SK-N-SH (cell line): ENCODE measurements at regions of chr2 and their contacts with region 1.

Region 1: DNA sequence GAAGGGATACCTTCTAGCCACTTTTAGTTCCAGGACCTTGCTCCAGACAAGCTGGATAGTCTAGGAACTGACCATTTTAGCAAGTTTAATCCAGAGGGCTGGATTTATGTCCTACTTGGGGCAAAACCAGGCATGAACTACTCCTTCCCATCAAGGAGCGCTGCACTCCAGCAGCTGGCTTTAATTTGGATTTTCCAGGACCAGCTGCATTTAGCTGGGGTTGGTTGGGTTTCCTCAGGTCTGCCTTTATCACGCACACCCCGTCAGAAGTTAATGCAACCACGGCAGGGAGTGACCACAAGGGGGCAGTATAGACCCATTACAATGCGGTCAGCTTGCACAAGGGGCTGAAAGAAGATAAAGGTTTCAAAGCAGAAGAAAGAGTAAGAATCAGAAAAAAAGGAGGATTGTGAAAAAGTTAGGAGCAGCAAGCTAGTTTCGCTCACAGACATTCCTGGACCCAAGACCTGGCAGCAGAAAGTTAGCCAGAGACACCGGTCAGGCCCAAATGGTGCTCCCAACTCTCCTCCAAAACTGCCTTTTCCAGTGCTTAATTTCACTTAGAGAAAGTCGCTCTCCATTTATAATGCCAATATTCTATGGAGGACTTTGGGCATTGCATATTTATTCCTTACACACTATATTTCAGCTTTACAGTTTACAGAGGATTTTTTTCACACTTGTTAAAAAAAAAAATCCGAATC is 40.1 kb downstream of the SLC4A1AP start:
- DNase-seq: peak; percentile 88
- H3K4me3 ChIP-seq: no peak overlapping the region; a peak in 1 of 4 replicates
- H3K27ac ChIP-seq: peak overlapping the region in 1 of 2 experiments; percentile 29; a peak in 1 of 4 replicates
- H3K4me1 ChIP-seq: peaks cover 10 to 16% of the 10 kb centered on the region in 2 experiments; a peak in 3 of 4 replicates
- H3K27me3 ChIP-seq: no peaks in the 10 kb centered on the region
- CTCF ChIP-seq: peak; percentile 99
- EP300 ChIP-seq: peak in 1 of 2 experiments; percentile 48; a peak in 1 of 4 replicates
- RAD21 ChIP-seq: peak; percentile 98

Region 2: GRCh38 chr2:27715318-27716210 is 11.8 kb after region 1 on chr2:
- CTCF ChIA-PET with region 1: interaction called, 64 read pairs
- POLR2A ChIA-PET with region 1: no interaction called
- DNase-seq: peak; percentile 93
- H3K4me3 ChIP-seq: peak overlapping the region; percentile 51 to 58
- H3K27ac ChIP-seq: peak overlapping the region; percentile 3 to 60; a peak in 3 of 4 replicates
- H3K4me1 ChIP-seq: peaks cover 9 to 11% of the 10 kb centered on the region in 2 experiments; a peak in 3 of 4 replicates
- H3K27me3 ChIP-seq: no peaks in the 10 kb centered on the region
- CTCF ChIP-seq: no peak
- EP300 ChIP-seq: 0 out of 4 replicates have a peak, but pooled peaks of 1 of the 2 experiments have one; percentile 17
- RAD21 ChIP-seq: no peak

Region 3: DNA sequence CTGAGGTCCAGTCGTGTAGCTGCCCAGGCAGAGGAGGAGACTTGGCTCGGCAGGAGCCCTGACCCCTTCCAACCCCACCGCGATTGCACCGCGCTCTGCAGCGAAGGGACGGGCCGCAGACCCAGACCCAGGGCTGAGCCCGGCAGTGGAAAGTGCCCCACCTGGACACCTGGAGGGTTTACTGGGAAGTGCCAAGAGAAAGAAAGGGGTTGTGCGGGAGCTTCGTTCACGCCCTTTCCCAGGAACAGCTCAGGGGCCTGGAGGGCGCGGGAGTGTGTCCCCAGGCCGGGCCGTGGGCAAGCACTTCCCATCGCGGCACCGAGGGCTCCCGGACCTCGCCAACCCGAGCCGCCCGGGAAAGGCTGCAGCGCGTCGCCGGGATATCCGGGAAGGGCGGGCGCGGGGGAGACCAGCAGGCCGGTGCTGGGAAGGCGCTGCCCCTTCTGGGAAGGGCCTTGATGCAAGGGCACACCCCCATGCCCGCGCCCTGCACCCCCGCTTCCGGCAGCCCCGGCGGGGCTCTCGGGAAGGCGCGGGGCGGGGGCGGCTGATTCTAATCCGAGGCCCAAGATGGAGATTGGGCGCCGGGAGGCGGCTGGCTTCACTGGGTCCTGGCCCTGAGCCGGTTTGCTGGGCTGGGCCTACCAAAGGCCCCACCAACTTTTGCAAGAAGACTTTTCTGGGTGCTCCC is 31.6 kb after region 1 on chr2:
- CTCF ChIA-PET with region 1: interaction called, 26 read pairs
- POLR2A ChIA-PET with region 1: no interaction called
- DNase-seq: no peak
- H3K4me3 ChIP-seq: no peak overlapping the region
- H3K27ac ChIP-seq: no peak overlapping the region
- H3K4me1 ChIP-seq: peaks cover 0 to 19% of the 10 kb centered on the region in 2 experiments; a peak in 2 of 4 replicates
- H3K27me3 ChIP-seq: no peaks in the 10 kb centered on the region
- CTCF ChIP-seq: no peak
- EP300 ChIP-seq: no peak
- RAD21 ChIP-seq: no peak

Region 4: GRCh38 chr2:27771548-27772335 is 68.0 kb after region 1 on chr2 and contains the start of gene MRPL33:
- CTCF ChIA-PET with region 1: interaction called, 10 read pairs
- POLR2A ChIA-PET with region 1: no interaction called
- DNase-seq: peak; percentile 99
- H3K4me3 ChIP-seq: peak within 1 kb of the TSS; percentile 78 to 98
- H3K27ac ChIP-seq: peak within 1 kb of the TSS; percentile 77 to 99
- H3K4me1 ChIP-seq: peaks cover 0 to 22% of the 10 kb centered on the region in 2 experiments; a peak in 3 of 4 replicates
- H3K27me3 ChIP-seq: no peaks in the 10 kb centered on the region
- CTCF ChIP-seq: no peak
- EP300 ChIP-seq: peak; percentile 4 to 28; a peak in 2 of 4 replicates
- RAD21 ChIP-seq: peak; percentile 17; the same call in 1 of the 2 replicates
- polyA plus RNA-seq, gene MRPL33: 132 and 153 TPM in 2 replicates

Region 5: DNA sequence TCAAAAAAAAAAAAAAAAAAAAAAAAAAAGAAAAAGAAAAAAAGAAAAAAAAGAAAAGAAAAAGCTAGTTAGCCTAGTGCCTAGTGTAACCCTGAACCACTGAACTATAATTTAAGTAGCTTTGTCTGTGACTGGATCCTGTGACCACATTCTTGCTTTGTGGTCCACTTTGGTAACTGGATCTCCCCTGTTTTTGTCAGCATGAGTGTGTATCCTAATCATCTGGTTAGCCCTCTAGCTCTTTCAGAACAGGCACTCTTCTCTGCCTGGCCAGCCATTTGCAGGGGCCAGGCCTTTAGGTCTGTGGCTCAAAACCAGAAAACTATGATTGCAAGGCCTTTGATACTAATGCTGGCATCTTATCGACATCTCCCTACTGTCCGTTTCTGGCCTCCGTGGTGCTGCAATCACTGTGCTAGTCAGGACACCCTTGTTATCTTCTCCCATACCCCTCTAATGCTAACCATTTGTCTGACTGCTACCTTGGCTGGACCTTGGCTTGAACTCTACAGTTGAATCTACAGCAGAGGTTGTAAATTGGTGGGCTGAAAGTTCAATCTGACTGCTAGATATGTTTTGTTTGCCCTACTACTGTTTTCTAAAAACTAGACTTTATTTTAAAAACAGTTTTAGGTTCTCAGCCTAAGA is 145.9 kb after region 1 on chr2:
- CTCF ChIA-PET with region 1: no interaction called
- POLR2A ChIA-PET with region 1: no interaction called
- DNase-seq: no peak
- H3K4me3 ChIP-seq: no peak overlapping the region
- H3K27ac ChIP-seq: no peak overlapping the region
- H3K4me1 ChIP-seq: no peaks in the 10 kb centered on the region
- H3K27me3 ChIP-seq: no peaks in the 10 kb centered on the region
- CTCF ChIP-seq: no peak
- EP300 ChIP-seq: no peak
- RAD21 ChIP-seq: no peak

Region 6: DNA sequence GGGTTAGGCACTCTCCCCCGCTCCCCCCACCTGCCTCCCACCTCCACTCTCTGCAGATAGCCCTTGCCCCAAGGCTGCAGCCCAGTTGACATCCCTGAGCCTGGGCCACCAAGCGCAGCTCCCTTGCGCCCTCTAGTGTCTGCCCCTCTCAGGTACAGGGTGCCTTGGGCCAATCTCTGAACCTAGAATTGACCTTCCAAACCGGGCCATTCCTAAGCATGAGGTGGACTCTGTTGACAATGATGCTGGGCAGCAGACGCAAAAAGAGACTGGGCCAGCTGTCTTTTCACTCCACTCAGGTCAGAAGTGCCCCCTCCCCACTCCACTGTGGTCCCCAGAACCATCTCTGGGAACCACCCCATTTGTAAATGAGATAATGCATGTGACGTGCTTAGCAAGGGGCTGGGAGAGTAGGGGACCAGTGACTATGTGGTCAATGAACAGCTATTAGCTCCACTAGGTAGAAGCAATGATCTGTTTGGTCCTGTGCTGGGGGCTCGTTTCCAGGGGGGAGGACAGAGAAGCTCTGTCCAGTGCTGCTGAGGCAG is 748.8 kb after region 1 on chr2:
- CTCF ChIA-PET with region 1: interaction called, 18 read pairs
- POLR2A ChIA-PET with region 1: no interaction called
- DNase-seq: peak; percentile 83
- H3K4me3 ChIP-seq: no peak overlapping the region; a peak in 1 of 4 replicates
- H3K27ac ChIP-seq: no peak overlapping the region
- H3K4me1 ChIP-seq: peaks cover 3 to 24% of the 10 kb centered on the region in 2 experiments; a peak in 2 of 4 replicates
- H3K27me3 ChIP-seq: no peaks in the 10 kb centered on the region
- CTCF ChIP-seq: peak; percentile 96
- EP300 ChIP-seq: no peak
- RAD21 ChIP-seq: peak; percentile 87